ENCODE measurements at regions of chr2 and their contacts with region 1.

Region 1: GRCh38 chr2:224357098-224357901 is 44.6 kb downstream of the FAM124B start:
- DNase-seq: peak; percentile 62
- H3K4me3 Mint-ChIP-seq: no peak overlapping the region
- H3K27ac Mint-ChIP-seq: no peak overlapping the region
- H3K4me1 Mint-ChIP-seq: no peaks in the 10 kb centered on the region
- H3K27me3 Mint-ChIP-seq: peaks cover 2% of the 10 kb centered on the region

Region 2: GRCh38 chr2:223970343-223971128 is 386.8 kb before region 1 on chr2:
- CTCF ChIA-PET with region 1: interaction called, 3 read pairs
- POLR2A ChIA-PET with region 1: no interaction called
- intact Hi-C with region 1: loop called (anchors 2 kb)
- DNase-seq: peak; percentile 42
- H3K4me3 Mint-ChIP-seq: no peak overlapping the region
- H3K27ac Mint-ChIP-seq: no peak overlapping the region
- H3K4me1 Mint-ChIP-seq: peaks cover 12% of the 10 kb centered on the region
- H3K27me3 Mint-ChIP-seq: no peaks in the 10 kb centered on the region

Region 3: DNA sequence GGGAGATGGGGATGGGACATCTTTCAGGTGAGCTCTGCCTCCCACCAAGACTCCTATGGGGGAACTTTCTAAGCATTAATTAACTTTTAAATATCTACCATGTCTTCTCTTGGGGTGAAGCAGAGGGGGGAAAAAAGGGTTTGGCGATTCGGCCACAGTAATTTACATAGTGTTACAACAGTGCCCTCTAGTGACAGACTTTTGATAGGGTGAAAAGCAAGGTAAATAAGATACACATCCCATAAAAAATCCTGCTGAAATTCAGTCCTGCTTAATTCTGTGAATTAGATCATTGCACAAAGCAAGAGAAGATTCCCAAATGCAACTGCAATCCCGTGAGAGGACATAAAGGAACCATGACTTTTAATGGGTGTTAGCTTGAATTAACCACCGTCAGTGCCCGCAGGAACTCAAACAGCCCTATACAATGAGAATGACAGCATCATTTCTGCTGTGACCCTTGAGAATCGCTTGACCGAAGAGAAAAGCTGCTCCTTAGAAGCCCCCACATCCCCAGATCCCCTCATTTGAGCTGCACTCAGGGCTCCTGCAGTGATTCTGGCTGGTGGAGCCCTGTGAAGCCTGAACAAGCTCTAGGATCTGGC is 11.8 kb after region 1 on chr2:
- CTCF ChIA-PET with region 1: interaction called, 20 read pairs
- POLR2A ChIA-PET with region 1: no interaction called
- intact Hi-C with region 1: no loop called
- DNase-seq: no peak
- H3K4me3 Mint-ChIP-seq: no peak overlapping the region
- H3K27ac Mint-ChIP-seq: no peak overlapping the region
- H3K4me1 Mint-ChIP-seq: no peaks in the 10 kb centered on the region
- H3K27me3 Mint-ChIP-seq: no peaks in the 10 kb centered on the region

Region 4: GRCh38 chr2:224449212-224450147 is 92.2 kb after region 1 on chr2:
- CTCF ChIA-PET with region 1: interaction called, 4 read pairs
- POLR2A ChIA-PET with region 1: no interaction called
- intact Hi-C with region 1: loop called (anchors 5 kb)
- DNase-seq: no peak
- H3K4me3 Mint-ChIP-seq: no peak overlapping the region
- H3K27ac Mint-ChIP-seq: no peak overlapping the region
- H3K4me1 Mint-ChIP-seq: no peaks in the 10 kb centered on the region
- H3K27me3 Mint-ChIP-seq: peaks cover 13% of the 10 kb centered on the region

Region 5: GRCh38 chr2:224650815-224651439 is 293.6 kb after region 1 on chr2:
- CTCF ChIA-PET with region 1: interaction called, 26 read pairs
- POLR2A ChIA-PET with region 1: no interaction called
- intact Hi-C with region 1: loop called (anchors 1 kb)
- DNase-seq: no peak
- H3K4me3 Mint-ChIP-seq: no peak overlapping the region
- H3K27ac Mint-ChIP-seq: no peak overlapping the region
- H3K4me1 Mint-ChIP-seq: peaks cover 2% of the 10 kb centered on the region
- H3K27me3 Mint-ChIP-seq: peaks cover 1% of the 10 kb centered on the region

Region 6: DNA sequence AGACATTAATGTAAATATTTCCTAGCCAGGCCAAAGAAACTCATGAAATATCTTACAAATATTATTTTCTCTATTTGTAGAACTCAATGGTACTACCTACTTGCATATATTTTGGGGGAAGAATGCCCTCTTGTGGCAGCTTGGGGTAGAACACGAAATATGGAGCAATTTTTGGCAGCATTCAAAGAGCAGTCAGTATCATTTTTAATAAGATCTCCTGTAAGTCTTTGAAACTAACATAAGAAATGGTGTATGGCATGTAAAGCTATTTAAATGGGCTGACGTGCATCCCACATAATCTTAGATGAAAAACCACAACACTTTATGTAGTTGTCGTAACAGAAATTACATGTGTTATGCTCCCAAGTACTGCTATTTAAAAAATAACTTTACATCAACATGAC is 421.2 kb after region 1 on chr2:
- CTCF ChIA-PET with region 1: interaction called, 3 read pairs
- POLR2A ChIA-PET with region 1: no interaction called
- intact Hi-C with region 1: loop called (anchors 1 kb)
- DNase-seq: peak; percentile 76
- H3K4me3 Mint-ChIP-seq: no peak overlapping the region
- H3K27ac Mint-ChIP-seq: peak overlapping the region; percentile 33
- H3K4me1 Mint-ChIP-seq: peaks cover 3% of the 10 kb centered on the region
- H3K27me3 Mint-ChIP-seq: no peaks in the 10 kb centered on the region

Region 7: DNA sequence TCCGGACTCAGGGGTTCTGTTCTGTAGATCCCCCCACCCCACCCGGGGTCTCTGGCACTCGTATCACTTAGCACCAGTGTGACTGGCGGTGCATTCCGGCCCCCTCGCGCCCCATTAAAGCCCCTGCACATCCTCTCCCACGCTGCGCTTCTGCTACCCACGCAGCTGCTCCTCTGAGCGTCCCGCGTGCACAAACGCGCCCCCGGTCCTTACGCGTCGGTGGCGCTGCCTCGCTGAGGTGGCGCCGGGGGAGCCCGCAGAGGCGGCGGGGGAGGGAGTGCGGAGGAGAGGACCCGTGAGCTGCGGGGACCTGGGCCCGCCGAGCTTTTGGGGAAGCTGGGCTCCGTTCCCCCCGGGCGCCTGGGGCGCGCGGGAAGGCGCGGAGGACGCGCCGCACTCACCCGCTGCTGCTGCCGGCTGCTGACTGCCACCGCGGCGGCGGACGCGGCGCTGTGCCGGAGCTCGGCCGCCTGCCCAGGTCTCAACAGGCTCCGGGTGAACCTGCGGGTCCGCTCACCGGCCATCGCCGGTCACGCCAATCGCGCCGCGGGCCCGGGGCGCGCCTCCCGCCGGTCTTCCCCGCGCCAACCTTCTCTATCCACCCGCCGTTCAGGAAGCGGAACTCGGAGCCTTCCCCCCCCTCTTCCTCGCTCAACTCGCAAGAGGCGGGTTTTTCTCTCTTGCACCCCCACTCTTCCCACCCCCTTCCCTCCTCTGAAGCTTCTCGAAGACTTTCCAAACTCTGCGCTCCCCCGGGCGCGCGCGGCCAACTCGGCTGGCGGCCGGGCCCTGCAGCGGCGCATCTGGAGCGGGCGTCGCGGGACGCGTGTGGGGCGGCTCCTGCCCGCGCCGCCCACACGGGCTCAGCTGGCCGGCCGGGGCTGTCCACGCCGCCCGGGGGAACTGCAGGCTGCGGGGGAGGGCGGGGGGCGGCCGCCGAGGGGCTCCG is 684.8 kb after region 1 on chr2 and contains the start of gene DOCK10:
- CTCF ChIA-PET with region 1: no interaction called
- POLR2A ChIA-PET with region 1: no interaction called
- intact Hi-C with region 1: no loop called
- DNase-seq: peak; percentile 67
- H3K4me3 Mint-ChIP-seq: peak within 1 kb of the TSS; percentile 88
- H3K27ac Mint-ChIP-seq: peak within 1 kb of the TSS; percentile 96
- H3K4me1 Mint-ChIP-seq: peaks cover 44% of the 10 kb centered on the region
- H3K27me3 Mint-ChIP-seq: no peaks in the 10 kb centered on the region
- total RNA-seq, gene DOCK10: 134 to 139 TPM

Region 8: DNA sequence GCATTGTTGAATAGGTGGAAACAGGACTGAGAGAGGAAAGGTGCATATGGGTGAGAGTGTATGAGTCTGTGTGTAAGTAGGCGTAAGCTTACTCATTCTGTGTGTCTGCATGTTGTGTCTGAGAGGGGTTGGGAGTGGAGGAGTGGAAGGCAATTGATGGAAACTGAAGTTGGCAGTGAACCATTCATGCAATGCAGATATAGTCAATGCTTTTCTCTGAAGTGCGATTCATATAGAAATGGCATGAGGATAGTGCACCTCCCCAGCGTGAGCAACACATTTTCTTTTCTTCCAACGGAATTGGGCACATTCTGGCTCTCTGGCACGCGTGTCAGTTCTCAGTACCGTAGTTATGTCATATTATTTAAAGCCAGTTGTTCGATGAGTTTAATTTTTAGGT is 1292.7 kb after region 1 on chr2:
- CTCF ChIA-PET with region 1: no interaction called
- POLR2A ChIA-PET with region 1: no interaction called
- intact Hi-C with region 1: loop called (anchors 10 kb)
- DNase-seq: no peak
- H3K4me3 Mint-ChIP-seq: no peak overlapping the region
- H3K27ac Mint-ChIP-seq: no peak overlapping the region
- H3K4me1 Mint-ChIP-seq: no peaks in the 10 kb centered on the region
- H3K27me3 Mint-ChIP-seq: peaks cover 5% of the 10 kb centered on the region

Measured in activated CD4-positive, alpha-beta memory T cell treated with anti-CD3 and anti-CD28 coated beads for 36 hours (primary cell).